Right ventricle myocardium superior (tissue), 1 donor: ENCODE measurements at regions of chr12 and their contacts with region 1.

Region 1: DNA sequence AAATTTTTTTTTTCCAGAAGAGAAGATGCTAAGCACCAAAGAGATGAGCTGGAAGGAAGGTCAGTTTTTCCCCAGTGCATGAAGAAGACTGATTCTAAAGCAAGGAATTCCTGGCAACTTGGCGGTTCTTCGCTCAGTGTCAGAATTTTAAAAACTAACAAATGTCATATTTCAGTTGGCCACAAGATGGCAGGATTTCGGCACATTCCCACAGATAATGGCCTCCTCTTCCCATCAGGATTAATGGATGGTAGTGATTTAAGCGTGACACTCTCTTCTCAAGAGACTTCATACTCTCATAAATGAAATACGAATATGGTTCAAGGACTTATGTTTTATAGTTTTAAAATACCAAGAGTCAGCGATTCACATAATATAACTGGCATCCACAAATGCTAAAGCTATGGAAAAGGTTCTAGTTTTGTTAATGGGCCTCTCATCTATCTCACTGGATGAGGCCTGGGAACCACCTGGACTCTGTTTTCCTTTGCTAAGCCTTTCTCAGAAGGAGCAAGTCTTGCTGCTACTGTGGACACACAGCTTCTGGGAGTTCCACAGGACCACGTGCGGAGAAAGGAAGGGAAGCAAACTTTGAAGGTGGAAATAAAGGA is 46.1 kb upstream of the PTPRO start:
- DNase-seq: no peak
- ATAC-seq: peak; percentile 54

Region 2: DNA sequence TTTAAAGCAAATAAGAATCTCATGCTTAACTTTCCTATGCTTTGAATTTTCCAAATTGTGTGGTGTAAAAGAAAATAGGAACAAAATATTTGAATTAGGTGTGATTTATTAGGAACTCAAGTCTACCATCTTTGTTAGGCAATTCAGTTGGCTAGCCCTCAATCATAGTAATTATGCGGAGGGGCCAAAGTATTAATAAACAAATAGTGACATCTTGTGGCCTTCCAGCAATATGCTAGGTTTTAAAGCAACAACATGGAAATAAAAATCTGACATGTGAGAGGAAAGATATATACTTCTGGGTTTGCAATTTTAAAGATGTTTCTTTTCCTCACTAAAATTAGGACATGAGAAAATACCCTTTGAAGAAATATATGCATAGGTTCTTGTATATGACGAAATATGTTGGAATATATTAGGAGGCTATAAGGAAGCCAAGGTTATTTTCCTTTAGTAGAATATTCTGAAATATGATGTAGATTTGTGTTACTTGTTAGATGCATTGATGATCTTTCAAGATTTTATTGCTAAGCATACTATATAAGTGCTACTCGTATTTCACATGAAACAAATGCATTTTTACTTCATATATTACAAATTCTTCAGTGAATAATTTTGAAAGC is 246.5 kb after region 1 on chr12:
- intact Hi-C with region 1: loop called (anchors 5 kb)
- DNase-seq: no peak
- ATAC-seq: peak; percentile 48

Region 3: GRCh38 chr12:15584366-15585041 is 308.3 kb after region 1 on chr12:
- intact Hi-C with region 1: loop called (anchors 10 kb)
- DNase-seq: no peak
- ATAC-seq: no peak

Region 4: GRCh38 chr12:15856097-15856982 is 580.1 kb after region 1 on chr12:
- intact Hi-C with region 1: loop called (anchors 5 kb)
- DNase-seq: no peak
- ATAC-seq: peak; percentile 80